Right lobe of liver (tissue), 6 donors: ENCODE measurements at regions of chr13 and their contacts with region 1.

Region 1: DNA sequence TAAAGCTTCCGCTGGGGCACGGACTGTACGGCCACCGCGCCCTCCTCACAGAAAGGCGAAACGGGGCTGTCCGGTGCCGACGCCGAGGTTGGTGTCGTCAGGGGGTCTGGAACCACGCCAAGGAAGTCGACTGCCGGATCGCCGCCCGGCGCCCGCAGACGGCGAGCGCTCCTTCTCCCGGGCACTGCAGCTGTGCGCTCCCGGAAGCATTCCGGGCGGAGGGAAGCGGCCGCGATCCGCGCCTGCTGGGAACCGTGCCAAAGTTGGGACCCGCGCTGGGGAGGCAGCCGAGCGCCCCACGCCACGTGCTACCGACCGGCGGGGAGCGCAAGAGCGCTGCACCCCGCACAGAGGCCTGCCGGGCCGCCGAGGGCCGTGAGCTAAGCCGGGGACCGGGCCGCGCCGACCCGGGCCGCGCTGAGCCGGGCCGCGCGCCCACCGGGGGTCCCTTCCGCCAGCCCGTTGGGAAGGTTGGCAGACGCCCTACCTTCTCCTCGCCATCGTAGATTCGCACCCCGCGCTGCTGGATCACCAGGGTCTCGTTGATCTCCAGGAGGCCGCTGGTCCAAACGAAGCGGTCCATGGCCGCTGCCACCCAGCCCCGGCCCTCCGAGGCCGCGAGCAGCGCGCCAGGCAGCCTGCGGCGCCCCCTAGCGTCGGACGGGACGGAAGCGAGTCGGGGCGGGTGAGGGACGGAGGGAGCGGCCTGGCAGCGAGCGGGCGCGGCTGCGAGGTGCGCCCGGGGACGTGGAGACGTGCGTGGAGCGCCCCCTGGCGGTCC is at the start of gene VPS36:
- DNase-seq: peak; percentile 97
- ATAC-seq: peak; percentile 85 to 91 (median 88)
- H3K4me3 ChIP-seq: peak within 1 kb of the TSS; percentile 77 to 81 (median 78)
- H3K27ac ChIP-seq: peak within 1 kb of the TSS; percentile 97 to 99 (median 99)
- H3K4me1 ChIP-seq: peaks cover 0 to 15% (median 6%) of the 10 kb centered on the region in 4 donors
- H3K27me3 ChIP-seq: no peaks in the 10 kb centered on the region
- CTCF ChIP-seq: peak; percentile 100
- POLR2A ChIP-seq: peak; percentile 93
- total RNA-seq, gene VPS36: 14.6 to 25.7 (median 21.5) TPM

Region 2: DNA sequence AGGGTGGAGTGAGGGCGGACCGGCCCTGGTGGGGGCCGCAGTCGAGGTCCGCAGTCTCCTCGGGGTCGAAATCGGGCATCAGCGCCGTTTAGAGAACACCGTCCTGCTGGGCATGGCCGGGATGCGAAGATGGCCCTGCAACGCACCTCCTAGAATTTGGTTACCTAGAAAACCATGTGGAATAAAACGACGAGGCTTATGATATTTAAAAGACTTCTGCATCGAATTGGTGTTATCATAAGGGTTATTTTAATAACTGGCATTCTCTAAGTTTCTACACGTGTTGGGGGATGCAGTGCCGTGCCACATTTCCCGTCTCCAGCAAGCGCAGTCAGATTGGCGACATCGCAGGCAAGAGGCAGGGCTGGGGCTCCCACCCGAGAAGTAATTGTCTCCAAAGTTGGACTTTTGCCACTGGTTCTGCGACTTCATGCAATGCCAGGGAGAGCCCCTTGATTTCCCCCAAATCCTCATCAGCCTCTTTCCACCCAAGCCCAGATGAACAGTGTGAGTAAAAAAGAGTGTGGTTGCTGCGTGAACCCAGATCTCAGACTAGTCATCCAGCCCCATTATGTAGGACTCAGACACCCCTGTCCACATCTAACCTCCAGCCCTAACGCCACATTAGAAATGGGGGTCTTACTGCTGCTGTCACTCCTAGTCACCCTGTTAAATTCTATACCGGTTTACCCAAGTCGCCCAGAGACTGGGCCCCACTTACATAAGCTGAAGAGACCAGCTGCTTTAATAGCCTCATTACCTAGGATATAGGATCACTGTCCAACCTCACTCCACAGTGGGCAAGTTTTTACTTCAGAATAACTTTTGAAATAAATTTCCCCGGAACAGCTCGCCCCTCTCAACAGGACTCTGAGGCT is 645.7 kb before region 1 on chr13:
- intact Hi-C with region 1: no loop called
- DNase-seq: no peak
- ATAC-seq: no peak
- H3K4me3 ChIP-seq: peak overlapping the region; percentile 76 to 84 (median 81)
- H3K27ac ChIP-seq: peak overlapping the region; percentile 100
- H3K4me1 ChIP-seq: peaks cover 0 to 34% (median 15%) of the 10 kb centered on the region in 4 donors
- H3K27me3 ChIP-seq: no peaks in the 10 kb centered on the region
- CTCF ChIP-seq: no peak
- POLR2A ChIP-seq: no peak

Region 3: DNA sequence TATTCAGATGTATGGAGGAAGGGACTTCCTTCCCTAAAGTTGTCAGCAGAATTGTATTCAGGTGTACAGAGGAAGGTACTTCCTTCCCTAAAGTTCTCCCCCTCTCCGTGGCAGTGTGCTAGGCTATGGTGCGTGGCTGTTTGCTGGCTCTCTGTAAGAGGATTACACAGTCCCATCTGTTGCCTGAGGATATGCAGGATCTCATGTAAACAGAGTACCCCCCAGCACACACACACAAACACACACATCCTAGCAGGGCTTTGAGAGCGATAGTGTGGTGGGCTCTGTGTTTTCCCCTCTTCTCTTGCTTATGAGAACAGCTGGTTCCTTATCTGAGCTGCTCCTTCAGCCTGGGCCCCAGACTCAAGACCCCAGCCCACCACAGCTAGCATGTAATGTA is 331.6 kb before region 1 on chr13:
- intact Hi-C with region 1: no loop called
- DNase-seq: no peak
- ATAC-seq: no peak
- H3K4me3 ChIP-seq: no peak overlapping the region
- H3K27ac ChIP-seq: no peak overlapping the region
- H3K4me1 ChIP-seq: no peaks in the 10 kb centered on the region
- H3K27me3 ChIP-seq: no peaks in the 10 kb centered on the region
- CTCF ChIP-seq: no peak
- POLR2A ChIP-seq: no peak

Region 4: DNA sequence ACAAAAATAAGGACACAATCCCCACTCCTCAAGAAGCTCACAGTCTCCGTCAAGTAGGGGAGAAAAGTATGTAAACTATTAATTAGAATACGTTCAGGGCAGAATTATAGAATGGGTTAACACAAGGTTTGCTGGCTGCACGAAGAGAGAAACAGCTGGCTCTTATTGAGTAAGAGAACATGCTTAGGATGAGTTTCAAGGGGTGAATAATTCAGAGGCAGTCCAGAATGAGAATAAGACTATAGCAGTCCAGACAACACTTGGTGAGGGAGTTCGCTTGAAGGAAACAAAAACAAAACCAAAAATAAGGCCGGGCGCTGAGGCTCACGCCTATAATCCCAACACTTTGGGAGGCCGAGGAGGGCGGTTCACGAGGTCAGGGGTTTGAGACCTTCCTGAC is 106.1 kb before region 1 on chr13:
- intact Hi-C with region 1: loop called (anchors 5 kb)
- DNase-seq: no peak
- ATAC-seq: no peak
- H3K4me3 ChIP-seq: no peak overlapping the region
- H3K27ac ChIP-seq: no peak overlapping the region
- H3K4me1 ChIP-seq: no peaks in the 10 kb centered on the region
- H3K27me3 ChIP-seq: no peaks in the 10 kb centered on the region
- CTCF ChIP-seq: no peak
- POLR2A ChIP-seq: no peak